OCI-LY7 (cell line): ENCODE measurements at regions of chr1 and their contacts with region 1.

Region 1: GRCh38 chr1:163361123-163361934 is 39.6 kb downstream of the NUF2 start:
- DNase-seq: peak; percentile 34
- H3K4me3 ChIP-seq: no peak overlapping the region
- H3K27ac ChIP-seq: no peak overlapping the region
- H3K4me1 ChIP-seq: peaks cover 6% of the 10 kb centered on the region
- CTCF ChIP-seq: peak; percentile 82

Region 2: DNA sequence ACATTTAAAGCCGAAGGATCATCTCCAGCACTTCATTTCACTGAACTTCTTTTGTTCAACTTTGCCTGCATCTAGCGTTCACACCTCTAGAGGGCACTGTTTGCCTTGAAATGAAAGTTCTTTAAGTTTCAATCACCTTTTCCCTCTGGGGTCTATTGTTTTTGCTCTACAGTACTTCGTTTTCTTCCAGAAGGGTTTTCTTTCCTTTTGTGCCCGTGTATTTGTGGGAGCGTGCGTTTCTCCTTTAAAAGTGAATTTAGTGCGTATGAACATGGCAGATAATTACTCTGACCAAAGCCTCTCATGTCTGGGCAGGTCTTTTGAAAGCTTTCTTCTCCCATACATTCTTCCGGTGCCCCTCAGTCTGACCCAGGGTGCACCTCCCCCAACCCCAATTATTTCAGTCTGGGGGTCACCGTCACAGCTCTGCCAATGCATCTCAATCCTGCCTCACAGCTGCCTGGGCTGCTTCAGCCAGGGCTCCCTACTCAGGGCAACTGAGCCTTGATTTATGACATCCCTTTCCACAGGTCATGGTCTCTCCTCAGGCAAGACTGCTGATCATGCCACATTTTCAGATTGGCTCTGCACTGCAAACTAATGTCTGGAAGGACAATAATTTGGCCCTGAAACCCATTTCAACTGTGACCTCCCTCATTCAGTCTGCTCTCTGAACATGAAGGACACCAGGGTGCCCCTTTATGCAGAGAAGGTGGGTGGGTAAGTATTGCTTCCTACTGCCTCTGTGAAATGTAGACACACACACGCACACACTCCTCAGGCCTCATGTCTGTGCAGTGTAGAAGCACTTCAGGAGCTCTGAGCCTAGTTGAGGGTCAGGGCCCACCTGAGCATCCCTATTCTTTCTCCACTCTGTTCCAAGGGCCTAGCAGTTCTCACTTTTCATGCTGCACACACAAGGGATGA is 49.0 kb after region 1 on chr1:
- CTCF ChIA-PET with region 1: no interaction called
- POLR2A ChIA-PET with region 1: no interaction called
- intact Hi-C with region 1: no loop called
- DNase-seq: peak; percentile 66
- H3K4me3 ChIP-seq: no peak overlapping the region
- H3K27ac ChIP-seq: no peak overlapping the region
- H3K4me1 ChIP-seq: peaks cover 11% of the 10 kb centered on the region
- CTCF ChIP-seq: peak; percentile 93

Region 3: GRCh38 chr1:163528710-163529348 is 167.5 kb after region 1 on chr1:
- CTCF ChIA-PET with region 1: no interaction called
- POLR2A ChIA-PET with region 1: no interaction called
- intact Hi-C with region 1: loop called (anchors 2 kb)
- DNase-seq: peak; percentile 34
- H3K4me3 ChIP-seq: no peak overlapping the region
- H3K27ac ChIP-seq: no peak overlapping the region
- H3K4me1 ChIP-seq: no peaks in the 10 kb centered on the region
- CTCF ChIP-seq: peak; percentile 84

Region 4: GRCh38 chr1:163580926-163581325 is 219.6 kb after region 1 on chr1:
- CTCF ChIA-PET with region 1: no interaction called
- POLR2A ChIA-PET with region 1: no interaction called
- intact Hi-C with region 1: no loop called
- DNase-seq: no peak
- H3K4me3 ChIP-seq: no peak overlapping the region
- H3K27ac ChIP-seq: no peak overlapping the region
- H3K4me1 ChIP-seq: no peaks in the 10 kb centered on the region
- CTCF ChIP-seq: no peak

Region 5: GRCh38 chr1:164786980-164787833 is 1425.9 kb after region 1 on chr1:
- CTCF ChIA-PET with region 1: no interaction called
- POLR2A ChIA-PET with region 1: no interaction called
- intact Hi-C with region 1: loop called (anchors 5 kb)
- DNase-seq: peak; percentile 70
- H3K4me3 ChIP-seq: no peak overlapping the region
- H3K27ac ChIP-seq: no peak overlapping the region
- H3K4me1 ChIP-seq: no peaks in the 10 kb centered on the region
- CTCF ChIP-seq: peak; percentile 90